ENCODE measurements at regions of chr12 and their contacts with region 1.

Region 1: GRCh38 chr12:110431957-110432587 is 18.1 kb downstream of the ARPC3 start:
- DNase-seq: no peak
- H3K4me3 ChIP-seq: no peak overlapping the region
- CTCF ChIP-seq: no peak

Region 2: GRCh38 chr12:110023059-110023606 is 408.9 kb before region 1 on chr12:
- CTCF ChIA-PET with region 1: interaction called, 13 read pairs
- POLR2A ChIA-PET with region 1: no interaction called
- DNase-seq: peak; percentile 40
- H3K4me3 ChIP-seq: no peak overlapping the region
- CTCF ChIP-seq: no peak

Region 3: DNA sequence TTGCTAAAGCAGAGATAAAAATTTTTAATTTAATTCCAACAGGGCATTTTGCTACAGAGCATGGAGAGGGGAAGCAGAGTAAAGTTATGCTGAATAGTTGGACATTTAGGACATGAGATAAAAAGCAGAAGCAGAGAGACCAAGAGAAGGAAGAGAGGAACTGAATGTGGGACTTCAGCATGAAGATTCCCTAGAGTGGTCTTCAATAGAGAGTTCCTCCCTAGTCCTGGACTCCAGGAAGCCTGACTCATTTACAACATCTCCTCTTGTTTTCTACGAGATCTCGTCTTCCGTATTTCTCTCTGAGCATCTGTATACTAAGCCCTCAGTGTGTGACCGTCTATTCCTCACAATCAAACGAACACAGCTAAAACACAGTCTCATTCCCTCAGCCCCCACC is 343.1 kb before region 1 on chr12:
- CTCF ChIA-PET with region 1: interaction called, 10 read pairs
- POLR2A ChIA-PET with region 1: no interaction called
- DNase-seq: no peak
- H3K4me3 ChIP-seq: no peak overlapping the region
- CTCF ChIP-seq: no peak

Region 4: GRCh38 chr12:110107369-110108281 is 324.4 kb before region 1 on chr12:
- CTCF ChIA-PET with region 1: interaction called, 65 read pairs
- POLR2A ChIA-PET with region 1: no interaction called
- DNase-seq: peak; percentile 90
- H3K4me3 ChIP-seq: no peak overlapping the region
- CTCF ChIP-seq: no peak

Region 5: GRCh38 chr12:110403146-110403975 is 28.7 kb before region 1 on chr12 and contains the start of gene ANAPC7:
- CTCF ChIA-PET with region 1: interaction called, 12 read pairs
- POLR2A ChIA-PET with region 1: no interaction called
- DNase-seq: peak; percentile 41
- H3K4me3 ChIP-seq: peak within 1 kb of the TSS; percentile 87
- CTCF ChIP-seq: peak; percentile 14

Region 6: GRCh38 chr12:110449799-110450497 is 17.9 kb after region 1 on chr12 and contains the start of gene ARPC3:
- CTCF ChIA-PET with region 1: interaction called, 13 read pairs
- POLR2A ChIA-PET with region 1: interaction called, 6 read pairs
- DNase-seq: peak; percentile 42
- H3K4me3 ChIP-seq: peak within 1 kb of the TSS; percentile 95
- CTCF ChIP-seq: peak; percentile 92